Dorsolateral prefrontal cortex (tissue), 120 donors: ENCODE measurements at regions of chr4 and their contacts with region 1.

Region 1: GRCh38 chr4:38062088-38062893 is 102.1 kb downstream of the PTTG2 start:
- DNase-seq: peak; percentile 59 to 85 (median 74)
- H3K4me3 ChIP-seq: peak overlapping the region in 56 of 59 donors; percentile 11 to 65 (median 43)
- H3K27ac ChIP-seq: peak overlapping the region in 20 of 59 donors; percentile 1 to 67 (median 40)
- H3K27me3 ChIP-seq: no peaks in the 10 kb centered on the region
- CTCF ChIP-seq: peak; percentile 80 to 97 (median 91)

Region 2: DNA sequence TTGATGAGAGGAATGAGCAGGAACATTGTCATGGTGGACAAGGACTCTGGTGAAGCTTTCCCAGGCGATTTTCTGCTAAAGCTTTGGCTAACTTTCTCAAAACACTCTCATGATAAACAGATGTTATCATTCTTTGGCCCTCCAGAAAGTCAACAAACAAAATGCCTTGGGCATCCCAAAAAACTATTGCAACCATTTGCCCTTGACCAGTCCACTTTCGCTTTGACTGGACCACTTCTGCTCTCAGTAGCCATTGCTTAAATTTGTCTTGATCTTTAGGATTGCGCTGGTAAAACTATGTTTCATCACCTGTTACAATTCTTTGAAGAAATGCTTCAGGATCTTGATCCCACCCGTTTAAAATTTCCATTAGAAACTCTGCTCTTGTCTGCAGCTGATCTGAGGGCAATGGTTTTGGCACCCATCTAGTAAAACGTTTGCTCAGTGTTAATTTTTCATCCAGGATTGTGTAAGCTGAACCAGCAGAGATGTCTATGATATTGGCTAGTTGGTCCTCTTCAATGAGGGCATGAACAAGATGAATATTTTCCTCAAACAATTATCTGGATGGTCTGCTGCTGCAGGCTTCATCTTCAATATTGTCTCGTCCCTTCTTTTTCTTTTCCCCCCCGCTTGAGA is 156.6 kb before region 1 on chr4:
- intact Hi-C with region 1: no loop called
- DNase-seq: no peak
- H3K4me3 ChIP-seq: no peak overlapping the region
- H3K27ac ChIP-seq: no peak overlapping the region
- H3K27me3 ChIP-seq: no peaks in the 10 kb centered on the region
- CTCF ChIP-seq: no peak

Region 3: DNA sequence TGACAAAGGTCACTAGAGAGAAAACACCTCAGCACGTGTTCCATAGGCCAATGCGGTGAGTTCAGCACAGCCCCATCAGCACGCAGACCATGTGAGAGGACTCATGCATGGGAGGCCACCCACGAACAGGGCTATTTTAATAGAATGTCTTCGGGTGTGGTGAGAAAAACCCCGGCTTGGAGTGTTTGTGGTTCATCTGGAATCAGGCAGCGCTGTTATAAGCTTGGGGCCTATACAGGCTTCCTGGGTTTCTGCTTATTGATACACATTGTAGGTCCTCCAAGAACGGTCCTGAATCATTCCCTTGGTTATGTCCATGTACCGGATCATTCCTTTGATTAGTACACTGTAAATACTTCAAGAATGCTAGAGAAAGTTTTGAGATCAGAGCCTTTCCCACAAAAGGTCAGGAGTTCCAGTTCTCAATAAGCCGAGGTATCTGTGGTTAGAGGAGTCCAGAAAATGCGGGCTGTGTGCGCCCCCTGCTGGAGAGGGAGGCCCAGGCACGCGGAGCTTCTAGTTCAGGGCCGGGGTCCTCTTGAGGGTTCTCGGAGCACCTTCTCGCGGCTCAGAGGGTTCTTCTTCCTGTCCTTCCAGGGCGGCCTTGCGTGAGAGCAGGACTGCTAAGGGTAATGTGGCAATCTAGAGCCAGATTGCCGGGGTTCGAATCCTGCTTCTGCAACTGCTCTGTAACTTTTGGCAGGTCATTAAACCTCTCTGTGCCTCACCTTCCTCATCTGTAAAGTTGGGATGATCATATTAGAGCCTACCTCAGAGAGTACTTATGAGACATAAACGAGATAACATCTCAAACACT is 668.7 kb after region 1 on chr4:
- intact Hi-C with region 1: loop called (anchors 5 to 10 kb)
- DNase-seq: peak; percentile 30 to 91 (median 78)
- H3K4me3 ChIP-seq: no peak overlapping the region
- H3K27ac ChIP-seq: no peak overlapping the region
- H3K27me3 ChIP-seq: no peaks in the 10 kb centered on the region
- CTCF ChIP-seq: peak; percentile 78 to 99 (median 94)

Region 4: GRCh38 chr4:38782452-38783108 is 720.3 kb after region 1 on chr4 and contains the start of gene TLR10:
- intact Hi-C with region 1: loop called in 1 of 2 experiments (anchors 10 kb)
- DNase-seq: peak in 2 of 10 donors; percentile 30 to 42
- H3K4me3 ChIP-seq: peak within 1 kb of the TSS in 38 of 59 donors; percentile 4 to 55 (median 28)
- H3K27ac ChIP-seq: peak within 1 kb of the TSS in 1 of 59 donors; percentile 15
- H3K27me3 ChIP-seq: no peaks in the 10 kb centered on the region
- CTCF ChIP-seq: peak; percentile 64 to 89 (median 82)
- total RNA-seq, gene TLR10: 0.27 to 6.7 (median 1.5) TPM

Region 5: DNA sequence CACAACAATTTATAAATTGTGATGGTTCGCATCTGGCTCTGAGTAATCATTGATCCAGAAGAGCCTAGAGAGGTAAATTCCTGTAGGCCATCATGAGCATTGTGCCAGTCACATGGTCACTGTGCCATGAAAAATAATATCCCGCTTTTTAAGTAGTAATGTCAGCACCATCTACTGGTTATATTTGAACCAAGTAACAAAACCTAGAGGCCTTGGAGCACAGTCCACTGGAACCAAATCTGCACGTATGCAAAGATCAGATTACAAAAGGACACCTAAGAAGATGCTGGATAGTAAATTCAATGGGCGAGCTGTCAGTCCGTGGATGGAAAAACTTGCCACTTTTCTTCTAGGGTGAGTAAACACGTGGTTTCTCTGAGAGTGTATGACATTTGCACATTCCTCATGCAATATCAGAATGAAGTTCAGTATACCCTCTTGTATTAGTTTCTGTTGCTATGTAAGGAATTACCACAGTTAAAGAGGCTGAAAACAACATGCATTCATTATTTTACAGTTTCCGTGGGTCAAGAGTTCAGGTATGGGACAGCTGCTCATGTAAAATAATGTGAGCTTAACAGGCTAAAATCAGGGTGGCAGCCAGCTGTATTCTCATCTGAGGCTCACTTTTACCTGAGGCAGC is 832.2 kb after region 1 on chr4:
- intact Hi-C with region 1: loop called in 1 of 2 experiments (anchors 10 kb)
- DNase-seq: no peak
- H3K4me3 ChIP-seq: no peak overlapping the region
- H3K27ac ChIP-seq: no peak overlapping the region
- H3K27me3 ChIP-seq: no peaks in the 10 kb centered on the region
- CTCF ChIP-seq: peak in 43 of 56 donors; percentile 8 to 60 (median 32)